GM12878 (cell line): ENCODE measurements at regions of chr18 and their contacts with region 1.

Region 1: DNA sequence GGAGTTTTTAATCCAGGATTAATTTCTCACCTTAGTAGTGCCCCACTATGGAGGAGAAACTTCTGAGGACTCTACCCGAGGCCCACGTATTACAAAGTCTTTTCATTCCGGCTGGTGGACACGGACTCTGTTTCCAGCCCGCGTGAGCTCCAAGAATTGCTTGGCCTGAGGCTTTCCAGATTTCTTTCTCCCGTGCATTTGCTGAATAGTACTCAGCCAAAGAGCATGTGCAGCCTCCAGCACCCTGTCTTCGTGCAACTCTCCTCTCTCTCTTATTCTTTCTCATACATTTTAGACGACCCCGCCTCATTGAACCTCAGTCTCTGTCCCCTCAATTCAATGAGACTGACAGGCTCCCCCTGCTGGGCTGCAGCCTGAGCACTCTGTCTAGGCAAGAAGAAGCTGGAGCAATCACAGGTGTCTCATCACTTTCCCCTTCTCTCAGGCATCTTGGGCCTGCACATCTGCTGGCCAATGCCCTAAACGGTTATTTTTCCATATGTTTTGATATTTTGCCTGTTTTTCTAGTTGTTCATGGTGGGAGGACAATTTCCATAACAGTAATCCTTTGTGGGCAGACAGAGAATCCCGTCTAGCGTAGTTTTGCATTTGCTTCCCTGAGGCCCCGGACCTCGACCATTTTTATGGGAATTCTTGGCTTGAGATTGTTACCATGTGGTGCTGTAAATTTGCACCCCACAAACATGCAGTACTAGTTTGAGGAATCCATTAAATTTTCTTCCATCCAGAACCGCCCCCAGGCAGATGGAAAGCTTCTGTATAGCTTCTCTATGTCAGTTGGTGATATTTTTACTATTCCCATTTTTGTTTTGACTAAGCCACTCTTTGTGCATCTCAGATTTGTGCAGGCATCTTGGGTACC is 50.1 kb upstream of the LPIN2 start:
- DNase-seq: no peak
- ATAC-seq: peak; percentile 79
- H3K4me3 ChIP-seq: no peak overlapping the region
- H3K27ac ChIP-seq: no peak overlapping the region
- H3K4me1 ChIP-seq: peaks cover 32% of the 10 kb centered on the region
- H3K27me3 ChIP-seq: no peaks in the 10 kb centered on the region
- CTCF ChIP-seq: peak; percentile 77 to 87 (median 82)
- EP300 ChIP-seq: no peak
- POLR2A ChIP-seq: no peak
- RAD21 ChIP-seq: peak; percentile 77

Region 2: DNA sequence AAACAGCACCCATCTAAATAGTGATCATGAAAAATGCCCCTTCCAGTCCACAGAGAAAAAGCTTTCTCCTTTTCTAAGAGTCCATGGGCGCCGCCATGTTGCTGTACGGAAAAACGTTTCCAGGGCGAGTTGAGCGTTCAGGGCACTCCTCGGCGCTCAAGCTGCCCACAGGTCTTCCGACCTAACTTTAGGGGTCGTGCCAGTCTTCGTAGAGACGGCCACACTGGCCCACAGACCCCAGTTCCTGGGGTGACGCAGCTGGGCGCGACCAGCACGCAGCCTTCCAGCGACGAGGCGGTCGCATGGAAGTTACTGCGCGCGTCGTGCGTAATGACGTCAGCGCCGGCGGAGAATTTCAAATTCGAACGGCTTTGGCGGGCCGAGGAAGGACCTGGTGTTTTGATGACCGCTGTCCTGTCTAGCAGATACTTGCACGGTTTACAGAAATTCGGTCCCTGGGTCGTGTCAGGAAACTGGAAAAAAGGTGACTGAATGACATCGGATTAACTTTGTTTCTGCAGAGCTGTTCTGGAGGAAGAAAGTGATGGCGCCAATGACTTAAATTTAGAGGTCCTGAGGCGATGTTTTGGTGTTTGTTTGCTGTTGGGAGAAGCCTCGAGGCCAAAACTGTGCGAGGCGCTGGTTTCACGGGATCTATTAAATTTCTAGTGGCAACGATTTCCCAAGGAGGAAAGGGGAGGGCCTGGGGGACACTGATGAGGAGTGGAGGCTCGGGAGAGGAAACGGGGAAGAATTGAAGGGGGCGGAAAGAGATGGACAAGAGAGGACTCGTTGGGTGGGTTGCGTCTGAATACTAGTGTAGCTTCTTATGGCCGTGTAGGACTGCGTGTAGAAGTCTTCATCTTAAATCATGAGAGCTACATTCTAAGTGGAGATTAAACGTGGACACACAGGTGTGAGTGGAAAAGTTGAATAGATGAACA is 491.6 kb before region 1 on chr18 and contains the starts of genes METTL4 and NDC80:
- CTCF ChIA-PET with region 1: no interaction called
- POLR2A ChIA-PET with region 1: no interaction called
- RAD21 ChIA-PET with region 1: no interaction called
- SMC1A ChIA-PET with region 1: no interaction called
- in situ Hi-C with region 1: no loop called
- intact Hi-C with region 1: no loop called
- DNase-seq: peak; percentile 71
- ATAC-seq: peak; percentile 82
- H3K4me3 ChIP-seq: peak within 1 kb of the TSS; percentile 82
- H3K27ac ChIP-seq: peak within 1 kb of the TSS; percentile 100
- H3K4me1 ChIP-seq: peaks cover 5% of the 10 kb centered on the region
- H3K27me3 ChIP-seq: no peaks in the 10 kb centered on the region
- CTCF ChIP-seq: 0 out of 6 replicates have a peak, but pooled peaks of 1 of the 3 experiments have one; percentile 12
- EP300 ChIP-seq: no peak
- POLR2A ChIP-seq: peak; percentile 87
- RAD21 ChIP-seq: no peak
- polyA plus RNA-seq, gene METTL4: 7.6 to 13.3 TPM
- polyA plus RNA-seq, gene NDC80: 54.4 to 55.0 TPM

Region 3: DNA sequence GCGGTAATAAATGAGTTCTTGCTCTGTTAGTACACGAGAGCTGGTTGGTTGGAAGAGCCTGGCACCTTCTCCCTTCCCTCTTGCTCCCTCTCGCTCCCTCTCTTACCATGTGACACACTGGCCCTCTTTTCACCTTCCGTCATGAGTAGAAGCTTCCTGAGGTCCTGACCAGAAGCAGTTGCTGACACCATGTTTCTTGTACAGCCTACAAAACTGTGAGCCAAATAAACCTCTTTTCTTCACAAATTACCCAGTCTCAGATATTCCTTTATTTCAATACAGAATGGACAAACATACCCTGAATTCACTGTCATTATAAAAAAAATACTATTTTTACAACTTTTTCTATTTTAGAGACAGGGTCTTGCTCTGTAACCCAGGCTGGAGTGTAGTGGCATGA is 175.6 kb before region 1 on chr18:
- CTCF ChIA-PET with region 1: no interaction called
- POLR2A ChIA-PET with region 1: no interaction called
- RAD21 ChIA-PET with region 1: no interaction called
- SMC1A ChIA-PET with region 1: no interaction called
- in situ Hi-C with region 1: no loop called
- intact Hi-C with region 1: no loop called
- DNase-seq: no peak
- ATAC-seq: no peak
- H3K4me3 ChIP-seq: no peak overlapping the region
- H3K27ac ChIP-seq: no peak overlapping the region
- H3K4me1 ChIP-seq: peaks cover 9% of the 10 kb centered on the region
- H3K27me3 ChIP-seq: no peaks in the 10 kb centered on the region; a peak in 1 of 4 replicates
- CTCF ChIP-seq: no peak
- EP300 ChIP-seq: no peak
- POLR2A ChIP-seq: no peak
- RAD21 ChIP-seq: no peak

Region 4: DNA sequence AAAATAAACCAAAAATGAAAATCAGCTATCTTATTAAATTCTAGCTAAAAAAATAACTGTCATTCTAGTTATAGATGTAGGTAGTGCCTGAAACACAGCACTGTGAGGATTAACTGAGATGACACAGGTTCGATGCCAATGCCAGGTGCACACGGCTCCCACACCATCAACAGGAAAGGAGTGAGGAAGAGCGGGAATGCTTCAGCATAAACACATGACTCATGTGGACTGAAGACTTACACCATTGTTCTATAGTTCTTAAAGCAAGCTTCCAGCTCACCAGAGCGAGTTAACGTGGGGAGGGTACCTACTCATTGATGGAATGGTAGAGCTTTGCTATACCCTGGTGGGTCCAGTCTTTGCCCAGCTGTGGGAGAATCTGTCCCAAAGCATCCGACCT is 139.6 kb before region 1 on chr18:
- CTCF ChIA-PET with region 1: interaction called, 13 read pairs
- POLR2A ChIA-PET with region 1: no interaction called
- RAD21 ChIA-PET with region 1: no interaction called
- SMC1A ChIA-PET with region 1: interaction called, 3 read pairs
- in situ Hi-C with region 1: no loop called
- intact Hi-C with region 1: no loop called
- DNase-seq: no peak
- ATAC-seq: no peak
- H3K4me3 ChIP-seq: no peak overlapping the region
- H3K27ac ChIP-seq: no peak overlapping the region
- H3K4me1 ChIP-seq: no peaks in the 10 kb centered on the region
- H3K27me3 ChIP-seq: no peaks in the 10 kb centered on the region
- CTCF ChIP-seq: no peak
- EP300 ChIP-seq: no peak
- POLR2A ChIP-seq: no peak
- RAD21 ChIP-seq: no peak

Region 5: DNA sequence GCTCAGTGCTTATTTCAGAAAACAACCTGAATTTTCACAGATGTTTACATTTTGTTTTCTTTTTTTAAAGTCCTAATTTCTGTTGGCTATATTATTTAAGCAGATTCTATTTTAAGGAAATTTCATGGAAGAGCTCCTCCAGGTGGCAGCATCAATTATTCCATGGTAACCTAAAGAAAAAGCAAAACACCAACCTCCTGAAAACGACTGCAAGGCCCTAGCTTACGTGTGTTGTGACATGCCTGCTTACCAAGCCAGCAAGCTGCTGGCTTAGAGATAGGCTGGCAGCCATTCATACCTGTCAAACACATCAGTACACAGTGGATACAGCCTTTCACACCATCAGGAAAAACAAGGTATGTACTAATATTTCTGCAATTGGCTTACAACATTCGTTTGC is 115.0 kb before region 1 on chr18:
- CTCF ChIA-PET with region 1: interaction called, 17 read pairs
- POLR2A ChIA-PET with region 1: no interaction called
- RAD21 ChIA-PET with region 1: interaction called, 7 read pairs
- SMC1A ChIA-PET with region 1: interaction called, 3 read pairs
- in situ Hi-C with region 1: no loop called
- intact Hi-C with region 1: no loop called
- DNase-seq: no peak
- ATAC-seq: no peak
- H3K4me3 ChIP-seq: no peak overlapping the region
- H3K27ac ChIP-seq: no peak overlapping the region
- H3K4me1 ChIP-seq: no peaks in the 10 kb centered on the region
- H3K27me3 ChIP-seq: no peaks in the 10 kb centered on the region
- CTCF ChIP-seq: no peak; a peak in 1 of 6 replicates
- EP300 ChIP-seq: no peak
- POLR2A ChIP-seq: no peak
- RAD21 ChIP-seq: no peak

Region 6: GRCh38 chr18:2985628-2986027 is 77.4 kb before region 1 on chr18:
- CTCF ChIA-PET with region 1: interaction called, 68 read pairs
- POLR2A ChIA-PET with region 1: no interaction called
- RAD21 ChIA-PET with region 1: interaction called, 21 read pairs
- SMC1A ChIA-PET with region 1: interaction called, 77 read pairs
- in situ Hi-C with region 1: no loop called
- intact Hi-C with region 1: no loop called
- DNase-seq: no peak
- ATAC-seq: peak; percentile 67
- H3K4me3 ChIP-seq: no peak overlapping the region
- H3K27ac ChIP-seq: no peak overlapping the region
- H3K4me1 ChIP-seq: peaks cover 21% of the 10 kb centered on the region
- H3K27me3 ChIP-seq: no peaks in the 10 kb centered on the region
- CTCF ChIP-seq: peak; percentile 56 to 71 (median 62)
- EP300 ChIP-seq: no peak
- POLR2A ChIP-seq: no peak
- RAD21 ChIP-seq: peak; percentile 81

Region 7: DNA sequence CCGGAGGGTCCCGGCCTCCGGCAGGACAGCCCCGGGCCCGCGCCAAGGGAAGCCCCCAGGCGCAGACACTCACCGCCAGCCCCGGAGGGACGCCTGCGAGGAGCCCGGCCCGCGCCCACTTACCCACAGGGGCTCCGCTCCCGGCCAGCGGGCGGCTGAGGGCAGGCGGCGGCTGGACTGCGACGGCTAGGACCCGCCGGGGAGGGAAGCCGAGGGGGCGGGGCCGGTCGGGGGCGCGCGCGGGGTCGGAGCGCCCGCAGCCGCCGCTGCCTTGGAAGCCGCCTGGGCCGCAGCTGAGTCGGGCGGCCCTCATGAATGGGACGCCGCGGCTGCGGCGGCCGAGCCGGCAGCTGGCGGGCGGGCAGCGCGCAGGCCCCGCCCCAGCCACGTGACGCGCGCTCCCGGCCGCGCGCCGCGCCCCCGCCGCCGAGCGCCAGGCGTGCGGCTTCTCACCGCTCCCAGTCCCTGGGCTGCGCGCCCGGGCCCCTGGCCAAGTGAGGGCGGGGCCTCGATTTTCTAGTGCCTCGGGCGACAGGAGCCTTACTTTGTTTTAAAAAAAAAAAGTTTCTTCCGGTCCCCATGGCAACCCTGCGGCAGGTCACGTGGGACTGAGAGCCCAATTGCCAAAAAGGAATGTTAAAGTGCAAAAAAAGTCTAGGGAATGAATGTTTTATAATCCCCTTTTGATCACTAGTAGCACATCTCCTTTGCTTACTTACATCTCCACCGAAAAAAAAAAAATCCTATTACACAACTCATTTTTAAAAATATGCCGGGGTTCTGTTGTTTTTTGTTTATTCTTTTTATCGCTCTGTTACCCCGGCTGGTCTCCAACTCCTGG is 49.9 kb before region 1 on chr18 and contains the start of gene LPIN2:
- CTCF ChIA-PET with region 1: interaction called, 8 read pairs
- POLR2A ChIA-PET with region 1: interaction called, 3 read pairs
- RAD21 ChIA-PET with region 1: interaction called, 4 read pairs
- SMC1A ChIA-PET with region 1: interaction called, 10 read pairs
- in situ Hi-C with region 1: no loop called
- intact Hi-C with region 1: loop called (anchors 5 kb)
- DNase-seq: peak; percentile 71
- ATAC-seq: peak; percentile 88
- H3K4me3 ChIP-seq: peak within 1 kb of the TSS; percentile 74
- H3K27ac ChIP-seq: peak within 1 kb of the TSS; percentile 71
- H3K4me1 ChIP-seq: peaks cover 14% of the 10 kb centered on the region
- H3K27me3 ChIP-seq: no peaks in the 10 kb centered on the region
- CTCF ChIP-seq: no peak
- EP300 ChIP-seq: peak in 1 of 2 experiments; percentile 44; a peak in 1 of 4 replicates
- POLR2A ChIP-seq: peak; percentile 61; the same call in 1 of the 2 replicates
- RAD21 ChIP-seq: no peak
- polyA plus RNA-seq, gene LPIN2: 4.1 to 4.5 TPM

Region 8: DNA sequence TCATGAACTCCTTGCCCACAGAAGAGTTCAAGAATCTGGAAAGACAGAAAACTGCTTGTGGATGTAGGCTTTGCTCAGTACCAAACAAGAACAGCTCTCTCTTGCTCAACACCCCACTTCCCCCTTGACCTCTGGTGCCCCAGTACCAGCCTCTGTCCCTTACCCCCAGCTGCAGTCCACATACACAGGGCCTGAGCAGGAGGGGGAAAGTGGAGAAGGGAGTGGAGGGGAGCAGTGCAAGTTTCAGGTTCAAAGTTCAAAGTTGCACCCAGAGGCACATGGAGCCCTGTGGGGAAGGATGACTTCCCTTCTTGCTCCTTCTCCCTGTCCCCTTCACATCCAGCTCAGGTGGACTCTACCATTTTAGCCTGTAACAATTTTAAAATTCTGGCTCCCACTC is 11.0 kb after region 1 on chr18:
- CTCF ChIA-PET with region 1: interaction called, 27 read pairs
- POLR2A ChIA-PET with region 1: interaction called, 3 read pairs
- RAD21 ChIA-PET with region 1: interaction called, 4 read pairs
- SMC1A ChIA-PET with region 1: interaction called, 10 read pairs
- in situ Hi-C with region 1: no loop called
- intact Hi-C with region 1: no loop called
- DNase-seq: no peak
- ATAC-seq: peak; percentile 46
- H3K4me3 ChIP-seq: no peak overlapping the region
- H3K27ac ChIP-seq: no peak overlapping the region
- H3K4me1 ChIP-seq: no peaks in the 10 kb centered on the region
- H3K27me3 ChIP-seq: no peaks in the 10 kb centered on the region
- CTCF ChIP-seq: no peak
- EP300 ChIP-seq: no peak
- POLR2A ChIP-seq: no peak
- RAD21 ChIP-seq: no peak

Region 9: GRCh38 chr18:3129053-3129864 is 66.2 kb after region 1 on chr18:
- CTCF ChIA-PET with region 1: interaction called, 29 read pairs
- POLR2A ChIA-PET with region 1: no interaction called
- RAD21 ChIA-PET with region 1: interaction called, 4 read pairs
- SMC1A ChIA-PET with region 1: interaction called, 9 read pairs
- in situ Hi-C with region 1: no loop called
- intact Hi-C with region 1: no loop called
- DNase-seq: no peak
- ATAC-seq: peak; percentile 100
- H3K4me3 ChIP-seq: no peak overlapping the region
- H3K27ac ChIP-seq: no peak overlapping the region
- H3K4me1 ChIP-seq: no peaks in the 10 kb centered on the region
- H3K27me3 ChIP-seq: no peaks in the 10 kb centered on the region
- CTCF ChIP-seq: peak; percentile 92 to 95 (median 95)
- EP300 ChIP-seq: no peak
- POLR2A ChIP-seq: no peak
- RAD21 ChIP-seq: peak; percentile 48

Region 10: GRCh38 chr18:3424280-3424890 is 361.3 kb after region 1 on chr18:
- CTCF ChIA-PET with region 1: no interaction called
- POLR2A ChIA-PET with region 1: no interaction called
- RAD21 ChIA-PET with region 1: no interaction called
- SMC1A ChIA-PET with region 1: no interaction called
- in situ Hi-C with region 1: no loop called
- intact Hi-C with region 1: no loop called
- DNase-seq: no peak
- ATAC-seq: no peak
- H3K4me3 ChIP-seq: no peak overlapping the region
- H3K27ac ChIP-seq: no peak overlapping the region
- H3K4me1 ChIP-seq: no peaks in the 10 kb centered on the region
- H3K27me3 ChIP-seq: no peaks in the 10 kb centered on the region
- CTCF ChIP-seq: no peak
- EP300 ChIP-seq: no peak
- POLR2A ChIP-seq: no peak
- RAD21 ChIP-seq: no peak